ENCODE measurements at regions of chr9 and their contacts with region 1.

Region 1: GRCh38 chr9:125538092-125538473 is 168.9 kb downstream of the MAPKAP1 start:
- DNase-seq: peak; percentile 75
- H3K4me3 Mint-ChIP-seq: peak overlapping the region; percentile 34
- H3K27ac Mint-ChIP-seq: peak overlapping the region; percentile 75
- H3K4me1 Mint-ChIP-seq: peaks cover 34% of the 10 kb centered on the region
- H3K27me3 Mint-ChIP-seq: no peaks in the 10 kb centered on the region
- CTCF ChIP-seq: no peak

Region 2: GRCh38 chr9:125183054-125183453 is 355.0 kb before region 1 on chr9:
- CTCF ChIA-PET with region 1: no interaction called
- intact Hi-C with region 1: no loop called
- DNase-seq: no peak
- H3K4me3 Mint-ChIP-seq: no peak overlapping the region
- H3K27ac Mint-ChIP-seq: no peak overlapping the region
- H3K4me1 Mint-ChIP-seq: peaks cover 14% of the 10 kb centered on the region
- H3K27me3 Mint-ChIP-seq: no peaks in the 10 kb centered on the region
- CTCF ChIP-seq: no peak

Region 3: DNA sequence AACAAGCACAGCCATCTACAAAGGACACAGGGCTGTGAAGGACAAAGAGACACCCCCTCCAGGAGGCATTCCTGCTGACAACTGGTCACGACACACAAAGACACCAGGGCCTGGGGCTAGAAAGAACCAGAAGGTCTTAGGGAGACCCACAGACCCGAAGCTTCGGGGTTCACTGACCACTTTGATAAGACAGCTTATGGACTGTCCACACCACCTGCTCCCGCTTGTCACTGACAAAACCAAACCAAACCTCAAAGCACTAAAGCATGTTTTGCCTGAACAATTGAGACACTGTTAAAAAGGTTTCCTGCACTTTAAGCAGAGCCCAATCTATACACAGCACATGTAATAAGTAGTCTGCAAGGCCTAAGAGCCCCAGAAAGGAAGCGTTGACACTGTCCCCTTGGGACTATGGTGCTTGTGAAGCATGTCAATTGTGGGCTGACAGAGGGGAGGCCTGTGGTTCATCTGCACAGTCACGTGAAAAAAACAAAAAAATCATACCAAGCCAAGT is 91.4 kb before region 1 on chr9:
- CTCF ChIA-PET with region 1: no interaction called
- intact Hi-C with region 1: loop called (anchors 10 kb)
- DNase-seq: no peak
- H3K4me3 Mint-ChIP-seq: no peak overlapping the region
- H3K27ac Mint-ChIP-seq: no peak overlapping the region
- H3K4me1 Mint-ChIP-seq: no peaks in the 10 kb centered on the region
- H3K27me3 Mint-ChIP-seq: no peaks in the 10 kb centered on the region
- CTCF ChIP-seq: no peak

Region 4: GRCh38 chr9:125794708-125795107 is 256.6 kb after region 1 on chr9:
- CTCF ChIA-PET with region 1: no interaction called
- intact Hi-C with region 1: no loop called
- DNase-seq: no peak
- H3K4me3 Mint-ChIP-seq: no peak overlapping the region
- H3K27ac Mint-ChIP-seq: no peak overlapping the region
- H3K4me1 Mint-ChIP-seq: no peaks in the 10 kb centered on the region
- H3K27me3 Mint-ChIP-seq: no peaks in the 10 kb centered on the region
- CTCF ChIP-seq: no peak

Region 5: GRCh38 chr9:125904155-125904851 is 366.2 kb after region 1 on chr9:
- CTCF ChIA-PET with region 1: no interaction called
- intact Hi-C with region 1: no loop called
- DNase-seq: no peak
- H3K4me3 Mint-ChIP-seq: no peak overlapping the region
- H3K27ac Mint-ChIP-seq: no peak overlapping the region
- H3K4me1 Mint-ChIP-seq: no peaks in the 10 kb centered on the region
- H3K27me3 Mint-ChIP-seq: no peaks in the 10 kb centered on the region
- CTCF ChIP-seq: no peak